ENCODE measurements at regions of chr18 and their contacts with region 1.

Region 1: GRCh38 chr18:46051731-46052461 is 20.2 kb downstream of the PSTPIP2 start:
- DNase-seq: no peak
- H3K4me3 ChIP-seq: no peak overlapping the region
- H3K27ac ChIP-seq: no peak overlapping the region
- H3K4me1 ChIP-seq: no peaks in the 10 kb centered on the region
- H3K27me3 ChIP-seq: no peaks in the 10 kb centered on the region
- CTCF ChIP-seq: no peak
- EP300 ChIP-seq: no peak
- POLR2A ChIP-seq: no peak

Region 2: GRCh38 chr18:45890606-45891005 is 161.3 kb before region 1 on chr18:
- intact Hi-C with region 1: no loop called
- DNase-seq: no peak
- H3K4me3 ChIP-seq: no peak overlapping the region
- H3K27ac ChIP-seq: no peak overlapping the region
- H3K4me1 ChIP-seq: no peaks in the 10 kb centered on the region
- H3K27me3 ChIP-seq: no peaks in the 10 kb centered on the region
- CTCF ChIP-seq: no peak
- EP300 ChIP-seq: no peak
- POLR2A ChIP-seq: no peak

Region 3: DNA sequence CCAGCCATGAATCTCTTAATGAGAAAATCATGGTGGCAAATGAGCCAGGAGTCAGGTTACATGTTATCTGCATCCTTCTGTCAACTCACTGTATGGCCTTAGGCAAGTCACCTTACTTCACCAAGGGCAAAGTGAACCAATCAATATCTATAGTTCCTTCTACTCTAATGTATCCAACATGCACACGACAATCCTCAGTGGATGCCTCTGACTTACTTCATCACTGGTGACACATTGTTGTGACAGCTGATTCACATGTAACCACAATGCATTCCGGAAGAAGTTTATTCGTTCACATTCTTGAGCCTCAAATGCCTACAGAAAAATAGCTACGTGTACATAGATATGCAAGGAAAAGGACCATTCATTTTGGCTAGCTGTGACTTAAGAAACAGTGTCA is 58.5 kb before region 1 on chr18:
- intact Hi-C with region 1: no loop called
- DNase-seq: no peak
- H3K4me3 ChIP-seq: no peak overlapping the region
- H3K27ac ChIP-seq: no peak overlapping the region
- H3K4me1 ChIP-seq: no peaks in the 10 kb centered on the region
- H3K27me3 ChIP-seq: no peaks in the 10 kb centered on the region
- CTCF ChIP-seq: no peak
- EP300 ChIP-seq: no peak
- POLR2A ChIP-seq: no peak

Region 4: GRCh38 chr18:46067431-46068007 is 15.6 kb after region 1 on chr18:
- intact Hi-C with region 1: loop called in 1 of 4 experiments (anchors 2 kb)
- DNase-seq: no peak
- H3K4me3 ChIP-seq: no peak overlapping the region
- H3K27ac ChIP-seq: no peak overlapping the region
- H3K4me1 ChIP-seq: peaks cover 8% of the 10 kb centered on the region
- H3K27me3 ChIP-seq: no peaks in the 10 kb centered on the region
- CTCF ChIP-seq: no peak
- EP300 ChIP-seq: no peak
- POLR2A ChIP-seq: no peak